ENCODE measurements at regions of chr2 and their contacts with region 1.

Region 1: DNA sequence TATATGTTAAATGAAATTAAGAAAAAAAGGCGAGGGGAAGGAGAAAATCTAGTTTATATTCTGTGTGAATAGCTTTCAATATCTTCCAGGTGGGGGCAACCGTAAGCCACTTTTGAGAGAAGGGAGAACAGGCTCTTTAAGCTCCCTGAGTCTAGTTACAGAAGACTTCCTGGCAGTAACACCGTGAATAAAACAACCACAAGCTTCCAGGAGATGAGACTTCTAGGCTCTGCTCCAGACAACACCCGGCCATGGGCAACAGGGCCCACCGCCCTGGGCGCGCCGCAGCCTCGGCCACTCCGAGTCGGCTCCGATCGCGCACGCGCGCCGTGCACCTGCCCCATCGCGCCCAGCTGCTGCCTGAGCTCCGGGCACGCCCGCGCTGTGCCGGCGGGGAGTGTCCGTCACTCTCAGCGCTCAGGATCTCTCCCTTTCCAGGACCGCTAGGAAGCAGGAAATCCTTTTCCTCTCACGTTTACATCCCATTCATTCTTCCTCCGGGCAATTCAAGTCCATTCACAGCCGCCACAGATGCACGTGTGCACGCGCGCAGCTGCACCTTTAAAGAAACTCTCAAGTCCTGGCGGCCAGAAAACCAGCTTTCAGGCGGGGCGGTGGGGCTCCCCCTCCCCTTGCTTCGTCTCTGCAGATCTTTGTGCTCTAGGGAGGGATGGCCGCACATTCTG is 19.4 kb upstream of the PAX3 start:
- DNase-seq: peak; percentile 41 to 49
- ATAC-seq: peak; percentile 68 to 89 (median 79)
- H3K4me3 ChIP-seq: peak overlapping the region; percentile 25 to 62 (median 54)
- H3K27ac ChIP-seq: no peak overlapping the region
- H3K4me1 ChIP-seq: peaks cover 0 to 26% (median 16%) of the 10 kb centered on the region in 9 donors
- H3K27me3 ChIP-seq: peaks cover 4 to 91% (median 69%) of the 10 kb centered on the region in 7 donors
- CTCF ChIP-seq: peak in 8 of 9 donors; percentile 9 to 66 (median 57)

Region 2: GRCh38 chr2:222057347-222058073 is 260.7 kb before region 1 on chr2:
- intact Hi-C with region 1: loop called in 3 of 10 experiments (anchors 5 to 10 kb)
- DNase-seq: no peak
- ATAC-seq: peak in 5 of 8 donors; percentile 57 to 67 (median 60)
- H3K4me3 ChIP-seq: no peak overlapping the region
- H3K27ac ChIP-seq: no peak overlapping the region
- H3K4me1 ChIP-seq: peaks cover 0 to 6% (median 0%) of the 10 kb centered on the region in 9 donors
- H3K27me3 ChIP-seq: peaks cover 0 to 75% (median 55%) of the 10 kb centered on the region in 7 donors
- CTCF ChIP-seq: peak; percentile 22 to 75 (median 67)

Region 3: DNA sequence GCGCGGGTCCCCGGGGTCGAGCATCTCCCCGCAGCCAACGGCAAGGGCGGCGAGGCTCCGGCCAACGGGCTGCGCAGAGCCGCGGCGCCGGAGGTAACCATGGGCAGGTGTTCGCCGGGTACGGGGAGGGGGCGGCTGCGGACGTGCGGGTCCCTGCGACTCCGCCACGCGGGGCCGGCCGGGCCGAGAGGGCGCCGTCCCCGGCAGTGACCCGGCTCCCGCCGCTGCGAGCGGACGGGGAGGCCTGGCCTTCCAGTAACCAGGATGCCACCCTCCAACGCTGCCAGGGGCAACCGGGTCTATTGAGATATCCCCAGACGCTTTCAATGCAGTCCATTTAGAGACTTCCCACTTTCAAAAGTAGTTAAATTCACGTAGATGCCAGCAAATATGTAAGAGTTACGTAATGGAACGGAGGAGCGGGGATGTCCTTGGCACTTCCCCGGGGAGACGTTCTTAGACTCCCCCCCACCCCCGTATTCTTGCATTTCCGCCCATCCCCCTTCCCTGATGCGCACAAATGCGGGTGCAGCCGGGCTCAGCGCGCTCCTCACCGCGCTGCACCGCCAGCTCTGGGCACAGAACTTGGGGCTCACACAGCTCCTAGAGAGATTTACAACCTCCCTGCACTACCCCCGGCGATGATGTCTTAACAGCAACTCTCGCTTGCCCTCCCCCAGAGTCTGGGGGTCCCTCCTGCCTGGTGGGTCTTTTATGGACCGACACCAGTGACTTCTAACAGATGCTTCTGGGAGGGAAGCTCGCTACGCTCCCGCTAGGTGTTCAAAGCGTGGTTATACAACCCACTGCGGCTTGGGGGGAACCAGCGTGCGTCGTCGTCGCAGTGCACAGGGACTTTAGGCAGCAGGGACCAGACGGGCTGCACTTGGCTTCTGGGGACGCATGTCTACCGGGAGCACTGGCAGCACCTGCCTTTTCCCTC is 106.8 kb after region 1 on chr2:
- intact Hi-C with region 1: loop called in 1 of 10 experiments (anchors 10 kb)
- DNase-seq: peak in 1 of 2 donors; percentile 10
- ATAC-seq: peak in 7 of 8 donors; percentile 34 to 79 (median 42)
- H3K4me3 ChIP-seq: peak overlapping the region; percentile 44 to 70 (median 56)
- H3K27ac ChIP-seq: peak overlapping the region in 5 of 10 donors; percentile 10 to 65 (median 42)
- H3K4me1 ChIP-seq: peaks cover 0 to 24% (median 3%) of the 10 kb centered on the region in 9 donors
- H3K27me3 ChIP-seq: peaks cover 0 to 52% (median 39%) of the 10 kb centered on the region in 7 donors
- CTCF ChIP-seq: no peak

Region 4: GRCh38 chr2:222451224-222451674 is 133.1 kb after region 1 on chr2:
- intact Hi-C with region 1: loop called in 1 of 10 experiments (anchors 10 kb)
- DNase-seq: no peak
- ATAC-seq: peak in 2 of 8 donors; percentile 46 to 47
- H3K4me3 ChIP-seq: no peak overlapping the region
- H3K27ac ChIP-seq: no peak overlapping the region
- H3K4me1 ChIP-seq: peaks cover 0 to 33% (median 10%) of the 10 kb centered on the region in 9 donors
- H3K27me3 ChIP-seq: no peaks in the 10 kb centered on the region
- CTCF ChIP-seq: no peak

Region 5: DNA sequence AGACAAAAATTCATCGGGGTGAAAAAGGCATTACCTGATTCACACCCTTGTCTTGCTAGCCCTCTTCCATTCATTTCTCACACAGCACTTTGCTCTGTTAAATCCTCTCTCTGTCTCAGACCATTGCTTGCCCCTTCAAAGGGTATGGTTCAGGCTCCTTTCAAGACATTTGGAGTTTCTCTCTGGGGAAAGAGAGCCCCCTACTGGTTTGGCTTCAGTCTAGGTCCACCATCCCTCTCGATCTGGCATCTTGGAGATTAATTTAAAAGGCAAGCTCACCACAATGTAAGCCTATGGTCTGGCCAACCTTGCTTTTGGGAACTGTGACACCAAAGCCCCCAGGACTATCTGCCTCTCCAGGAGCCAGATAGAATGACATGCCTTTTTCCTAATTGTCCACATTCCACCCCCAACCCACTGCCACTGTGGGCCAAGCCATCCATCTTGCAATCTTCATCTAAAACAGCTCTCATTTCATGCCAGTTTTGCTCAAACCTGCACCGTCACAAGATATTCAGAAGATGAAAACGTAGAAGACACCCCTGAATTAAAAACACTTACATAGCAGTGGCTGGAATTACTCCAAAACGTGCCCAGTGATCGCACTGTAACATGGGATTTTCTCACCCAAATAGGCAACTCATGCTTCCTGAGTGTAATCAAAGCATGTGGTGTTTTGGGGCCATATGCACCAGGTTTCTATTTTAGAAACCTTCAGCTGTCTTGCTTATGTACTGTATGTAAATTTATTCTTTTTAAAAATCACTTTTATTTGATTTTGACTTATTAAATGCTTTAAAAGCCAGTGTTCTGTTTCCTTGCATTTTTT is 243.9 kb after region 1 on chr2:
- intact Hi-C with region 1: loop called (anchors 2 to 5 kb)
- DNase-seq: peak in 1 of 2 donors; percentile 52
- ATAC-seq: peak; percentile 60 to 77 (median 72)
- H3K4me3 ChIP-seq: no peak overlapping the region
- H3K27ac ChIP-seq: no peak overlapping the region
- H3K4me1 ChIP-seq: peaks cover 0 to 6% (median 0%) of the 10 kb centered on the region in 9 donors
- H3K27me3 ChIP-seq: peaks cover 0 to 2% (median 0%) of the 10 kb centered on the region in 7 donors
- CTCF ChIP-seq: peak; percentile 26 to 68 (median 61)

Region 6: DNA sequence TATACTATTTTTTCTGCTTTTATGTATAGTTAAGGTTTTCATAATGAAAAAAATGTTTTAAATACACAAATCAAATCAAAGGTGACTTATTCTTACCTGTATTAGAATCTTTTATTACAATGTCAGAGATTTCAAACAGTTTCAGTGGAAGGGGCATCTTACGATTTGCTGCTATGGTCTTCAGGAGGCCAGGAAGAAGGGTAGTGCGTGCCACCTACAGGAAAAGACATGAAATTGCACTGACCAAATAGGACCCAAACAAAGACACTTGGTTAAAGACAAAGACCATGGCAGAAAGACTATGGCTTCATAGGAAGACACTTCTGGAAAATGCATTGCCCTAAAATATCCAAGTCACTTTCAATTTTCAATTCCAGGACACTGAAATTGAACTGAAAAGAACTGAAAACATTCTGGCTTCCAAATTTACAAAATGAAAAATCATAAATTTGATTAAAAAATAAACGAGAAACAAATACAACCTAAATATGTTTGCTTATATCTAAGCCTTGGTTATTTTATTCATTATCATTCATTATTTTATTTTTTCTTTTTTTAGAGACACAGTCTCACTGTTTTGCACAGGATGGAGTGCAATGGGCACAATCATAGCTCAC is 295.7 kb after region 1 on chr2:
- intact Hi-C with region 1: loop called in 9 of 10 experiments (anchors 1 to 5 kb)
- DNase-seq: no peak
- ATAC-seq: peak in 3 of 8 donors; percentile 51 to 63 (median 57)
- H3K4me3 ChIP-seq: no peak overlapping the region
- H3K27ac ChIP-seq: no peak overlapping the region
- H3K4me1 ChIP-seq: peaks cover 0 to 6% (median 0%) of the 10 kb centered on the region in 9 donors
- H3K27me3 ChIP-seq: no peaks in the 10 kb centered on the region
- CTCF ChIP-seq: peak; percentile 53 to 81 (median 73)